Heart right ventricle (tissue), 16 donors: ENCODE measurements at regions of chr1 and their contacts with region 1.

Region 1: GRCh38 chr1:207221934-207222351 is 99.5 kb upstream of the CD55 start:
- DNase-seq: no peak
- ATAC-seq: no peak
- H3K4me3 ChIP-seq: no peak overlapping the region
- H3K27ac ChIP-seq: no peak overlapping the region
- H3K4me1 ChIP-seq: peaks cover 0 to 15% (median 13%) of the 10 kb centered on the region in 9 donors
- H3K27me3 ChIP-seq: no peaks in the 10 kb centered on the region
- CTCF ChIP-seq: no peak

Region 2: GRCh38 chr1:206797534-206798383 is 424.2 kb before region 1 on chr1:
- intact Hi-C with region 1: no loop called
- DNase-seq: no peak
- ATAC-seq: no peak
- H3K4me3 ChIP-seq: no peak overlapping the region
- H3K27ac ChIP-seq: no peak overlapping the region
- H3K4me1 ChIP-seq: peaks cover 0 to 31% (median 0%) of the 10 kb centered on the region in 9 donors
- H3K27me3 ChIP-seq: peaks cover 0 to 5% (median 0%) of the 10 kb centered on the region in 7 donors
- CTCF ChIP-seq: peak in 7 of 9 donors; percentile 34 to 51 (median 46)

Region 3: DNA sequence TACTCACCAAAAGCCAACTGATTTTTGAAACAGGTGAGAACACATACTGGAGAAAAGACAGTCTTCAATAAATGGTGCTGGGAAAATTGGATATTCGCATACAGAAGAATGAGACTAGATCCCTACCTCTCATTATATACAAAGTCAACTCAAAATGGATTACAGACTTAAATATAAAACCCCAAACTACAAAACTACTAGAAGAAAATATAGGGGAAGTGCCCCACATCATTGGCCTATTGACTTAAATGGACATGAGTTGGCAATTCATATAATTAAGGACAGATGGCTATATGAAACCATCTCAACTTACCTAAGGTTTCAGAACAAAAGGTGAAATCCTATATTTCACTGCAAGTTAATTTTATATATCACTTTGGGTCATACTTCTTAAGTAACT is 57.9 kb before region 1 on chr1:
- intact Hi-C with region 1: loop called in 1 of 10 experiments (anchors 10 kb)
- DNase-seq: no peak
- ATAC-seq: no peak
- H3K4me3 ChIP-seq: no peak overlapping the region
- H3K27ac ChIP-seq: no peak overlapping the region
- H3K4me1 ChIP-seq: peaks cover 0 to 5% (median 0%) of the 10 kb centered on the region in 9 donors
- H3K27me3 ChIP-seq: no peaks in the 10 kb centered on the region
- CTCF ChIP-seq: no peak